ENCODE measurements at regions of chr7 and their contacts with region 1.

Region 1: GRCh38 chr7:55086413-55087201 is 67.8 kb downstream of the EGFR start:
- DNase-seq: peak; percentile 82
- ATAC-seq: peak; percentile 91
- H3K4me3 ChIP-seq: no peak overlapping the region
- H3K27ac ChIP-seq: 0 out of 2 replicates have a peak overlapping the region, but pooled peaks have one; percentile 40
- H3K4me1 ChIP-seq: peaks cover 15% of the 10 kb centered on the region
- H3K27me3 ChIP-seq: no peaks in the 10 kb centered on the region
- CTCF ChIP-seq: no peak
- EP300 ChIP-seq: peak; percentile 35 to 50; a peak in 2 of 4 replicates
- POLR2A ChIP-seq: no peak
- RAD21 ChIP-seq: no peak

Region 2: DNA sequence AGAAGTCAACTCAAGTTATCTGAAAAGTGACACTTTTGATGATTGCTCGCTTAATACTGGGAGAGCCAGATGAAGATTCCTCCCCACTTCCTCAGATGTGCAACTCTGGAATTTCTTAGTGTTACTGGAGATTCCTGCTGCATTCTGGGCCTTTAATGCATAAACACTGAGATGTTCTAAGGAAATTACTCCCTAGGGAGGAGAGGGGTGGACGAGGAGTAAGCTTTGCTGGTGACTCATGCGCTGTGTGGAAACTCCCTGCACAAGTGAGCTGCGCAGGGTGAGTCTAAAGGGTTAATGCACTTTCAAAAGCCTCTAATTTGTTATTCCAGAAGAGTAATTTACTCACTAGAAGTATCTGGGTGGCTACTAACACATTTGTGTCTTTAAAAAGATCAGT is 21.5 kb before region 1 on chr7:
- CTCF ChIA-PET with region 1: interaction called, 6 read pairs
- POLR2A ChIA-PET with region 1: interaction called, 16 read pairs
- RAD21 ChIA-PET with region 1: interaction called, 44 read pairs
- SMC1A ChIA-PET with region 1: interaction called, 99 read pairs
- in situ Hi-C with region 1: no loop called
- intact Hi-C with region 1: no loop called
- DNase-seq: peak; percentile 31
- ATAC-seq: peak; percentile 88
- H3K4me3 ChIP-seq: no peak overlapping the region
- H3K27ac ChIP-seq: no peak overlapping the region
- H3K4me1 ChIP-seq: peaks cover 3% of the 10 kb centered on the region; the same call in 1 of the 2 replicates
- H3K27me3 ChIP-seq: no peaks in the 10 kb centered on the region
- CTCF ChIP-seq: no peak
- EP300 ChIP-seq: no peak; a peak in 1 of 4 replicates
- POLR2A ChIP-seq: no peak
- RAD21 ChIP-seq: no peak

Region 3: GRCh38 chr7:55073945-55074499 is 12.6 kb before region 1 on chr7:
- CTCF ChIA-PET with region 1: interaction called, 10 read pairs
- POLR2A ChIA-PET with region 1: interaction called, 19 read pairs
- RAD21 ChIA-PET with region 1: interaction called, 84 read pairs
- SMC1A ChIA-PET with region 1: interaction called, 99 read pairs
- in situ Hi-C with region 1: no loop called
- intact Hi-C with region 1: loop called (anchors 2 kb)
- DNase-seq: peak; percentile 91
- ATAC-seq: peak; percentile 94
- H3K4me3 ChIP-seq: no peak overlapping the region
- H3K27ac ChIP-seq: peak overlapping the region; percentile 77
- H3K4me1 ChIP-seq: peaks cover 24% of the 10 kb centered on the region
- H3K27me3 ChIP-seq: no peaks in the 10 kb centered on the region
- CTCF ChIP-seq: no peak
- EP300 ChIP-seq: peak in 1 of 2 experiments; percentile 54; a peak in 1 of 4 replicates
- POLR2A ChIP-seq: peak; percentile 64
- RAD21 ChIP-seq: no peak

Region 4: GRCh38 chr7:55140221-55140940 is 53.8 kb after region 1 on chr7:
- CTCF ChIA-PET with region 1: interaction called, 5 read pairs
- POLR2A ChIA-PET with region 1: no interaction called
- RAD21 ChIA-PET with region 1: interaction called, 9 read pairs
- SMC1A ChIA-PET with region 1: interaction called, 12 read pairs
- in situ Hi-C with region 1: no loop called
- intact Hi-C with region 1: no loop called
- DNase-seq: peak; percentile 63
- ATAC-seq: peak; percentile 97
- H3K4me3 ChIP-seq: no peak overlapping the region
- H3K27ac ChIP-seq: no peak overlapping the region
- H3K4me1 ChIP-seq: peaks cover 5% of the 10 kb centered on the region
- H3K27me3 ChIP-seq: no peaks in the 10 kb centered on the region
- CTCF ChIP-seq: no peak
- EP300 ChIP-seq: no peak
- POLR2A ChIP-seq: no peak
- RAD21 ChIP-seq: no peak

Measured in GM12878 (cell line).